Ascending aorta (tissue), 2 donors: ENCODE measurements at regions of chr10 and their contacts with region 1.

Region 1: DNA sequence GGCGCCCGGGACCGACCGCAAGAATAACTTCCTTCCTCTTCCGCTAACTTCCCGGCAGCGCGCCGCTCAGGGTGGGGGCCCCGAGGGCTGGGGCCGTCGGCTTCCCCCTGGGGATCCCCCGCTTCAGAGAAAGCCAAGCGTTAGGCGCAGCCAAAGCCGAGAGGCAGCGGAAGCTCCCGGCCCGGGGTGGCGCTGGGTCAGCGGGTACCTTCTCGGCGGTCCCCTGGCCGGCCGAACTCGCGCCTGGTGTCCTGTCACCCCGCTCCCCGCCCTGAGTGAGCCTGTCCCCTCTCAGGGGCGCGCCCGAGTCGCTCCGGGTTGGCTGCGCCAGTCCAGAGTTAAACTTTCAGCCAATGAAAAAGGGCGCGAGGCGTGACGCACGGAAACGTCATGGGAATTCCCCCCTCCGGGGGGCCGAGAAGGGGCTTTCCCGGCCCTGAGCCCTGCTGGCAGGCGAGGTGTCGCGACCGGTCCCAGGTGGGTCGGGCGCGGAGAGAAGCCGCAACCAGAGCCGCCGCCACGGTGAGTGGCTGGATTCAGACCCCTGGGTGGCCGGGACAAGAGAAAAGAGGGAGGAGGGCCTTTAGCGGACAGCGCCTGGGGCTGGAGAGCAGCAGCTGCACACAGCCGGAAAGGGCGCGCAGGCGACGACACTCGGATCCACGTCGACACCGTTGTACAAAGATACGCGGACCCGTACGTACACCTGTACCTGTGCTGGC is 1.3 kb upstream of the NFKB2 start:
- DNase-seq: peak; percentile 82 to 97
- H3K4me3 ChIP-seq: peak overlapping the region; percentile 65 to 85
- H3K27ac ChIP-seq: peak overlapping the region; percentile 89 to 97
- H3K4me1 ChIP-seq: peaks cover 8 to 23% of the 10 kb centered on the region in 2 donors
- H3K27me3 ChIP-seq: no peaks in the 10 kb centered on the region
- CTCF ChIP-seq: peak in 2 of 3 experiments; percentile 94 to 99

Region 2: DNA sequence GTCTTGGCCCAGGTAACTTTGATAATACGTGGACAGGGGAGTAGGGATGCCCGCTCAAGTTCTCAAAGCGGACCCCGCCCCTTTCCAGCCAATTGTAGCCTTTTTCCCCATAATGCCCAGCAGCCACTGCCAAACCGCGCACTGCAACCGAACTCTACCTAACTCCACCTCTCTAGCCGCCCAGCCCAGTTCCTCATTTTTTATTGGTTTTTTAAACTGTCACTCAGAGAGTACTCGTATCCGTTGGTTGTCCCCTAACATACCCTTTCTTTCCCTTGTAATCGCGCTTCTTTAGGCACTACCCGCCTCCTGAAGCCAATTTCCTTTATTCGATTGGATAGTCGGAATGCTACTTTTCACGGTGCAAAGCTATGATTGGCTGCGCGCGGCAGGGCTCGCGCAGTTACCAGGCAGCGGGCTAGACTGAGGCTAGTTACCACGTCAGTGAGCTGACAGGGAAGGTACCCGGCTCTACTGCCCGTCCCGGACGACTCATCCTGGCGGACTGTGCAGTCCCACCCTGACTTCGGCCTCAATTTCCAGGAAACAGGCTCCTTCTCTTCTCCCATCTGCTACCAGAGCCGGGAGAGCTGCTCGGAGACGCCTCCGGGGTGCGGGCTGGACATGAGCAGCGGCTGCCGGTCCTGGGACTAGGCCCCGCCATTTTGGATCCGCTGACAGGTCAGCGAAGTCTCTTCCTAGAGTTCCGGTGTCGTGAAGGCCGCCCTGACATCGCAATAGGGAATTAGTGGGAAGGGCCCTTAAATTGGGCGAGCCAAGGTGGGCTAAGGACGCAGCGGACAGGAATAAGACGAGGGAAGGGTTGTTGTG is 148.9 kb before region 1 on chr10 and contains the start of gene GBF1:
- intact Hi-C with region 1: loop called (anchors 1 kb)
- DNase-seq: peak; percentile 89 to 97
- H3K4me3 ChIP-seq: peak within 1 kb of the TSS; percentile 66 to 92
- H3K27ac ChIP-seq: peak within 1 kb of the TSS; percentile 85 to 90
- H3K4me1 ChIP-seq: peaks cover 13 to 30% of the 10 kb centered on the region in 2 donors
- H3K27me3 ChIP-seq: no peaks in the 10 kb centered on the region
- CTCF ChIP-seq: no peak
- total RNA-seq, gene GBF1: 56.0 TPM

Region 3: DNA sequence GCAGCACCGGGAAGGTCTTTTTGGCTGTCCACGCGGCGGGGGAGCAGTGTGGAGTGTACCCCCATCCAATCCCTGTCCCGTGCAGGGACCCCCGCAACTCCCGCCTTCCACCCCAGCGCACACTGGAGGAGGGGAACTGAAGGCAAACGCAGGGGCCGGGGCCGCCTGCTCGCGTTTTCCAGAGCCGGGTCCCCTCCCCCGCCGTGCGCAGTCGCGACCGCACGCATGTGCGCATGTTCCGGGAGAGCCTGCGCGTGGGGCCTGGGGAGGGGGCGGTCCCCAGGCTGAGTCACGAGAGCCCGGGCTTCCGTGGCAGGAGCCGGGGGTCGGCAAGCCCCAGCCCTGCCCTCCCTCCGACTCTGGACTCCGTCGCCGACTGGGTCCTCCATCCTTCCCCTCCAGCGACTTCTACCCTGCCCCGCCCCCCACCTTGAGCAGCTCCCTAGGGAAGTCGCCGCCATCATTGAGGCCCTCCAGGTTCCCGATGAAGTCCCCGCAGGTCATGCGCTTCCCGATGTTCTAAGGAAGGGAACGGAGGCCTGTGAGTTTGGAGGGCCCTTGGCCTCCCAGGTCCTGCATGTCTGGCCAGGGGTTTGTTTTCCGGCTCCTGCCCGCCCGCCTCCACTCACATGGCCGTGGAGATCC is 16.3 kb after region 1 on chr10:
- intact Hi-C with region 1: no loop called
- DNase-seq: no peak
- H3K4me3 ChIP-seq: peak overlapping the region; percentile 2 to 40
- H3K27ac ChIP-seq: no peak overlapping the region
- H3K4me1 ChIP-seq: peaks cover 3 to 7% of the 10 kb centered on the region in 2 donors
- H3K27me3 ChIP-seq: peaks cover 16% of the 10 kb centered on the region
- CTCF ChIP-seq: no peak

Region 4: GRCh38 chr10:102420810-102421644 is 26.8 kb after region 1 on chr10 and contains the start of gene FBXL15:
- intact Hi-C with region 1: loop called (anchors 1 kb)
- DNase-seq: peak; percentile 85 to 99
- H3K4me3 ChIP-seq: peak within 1 kb of the TSS; percentile 92 to 93
- H3K27ac ChIP-seq: peak within 1 kb of the TSS; percentile 85 to 86
- H3K4me1 ChIP-seq: peaks cover 16 to 27% of the 10 kb centered on the region in 2 donors
- H3K27me3 ChIP-seq: peaks cover 13% of the 10 kb centered on the region
- CTCF ChIP-seq: no peak
- total RNA-seq, gene FBXL15: 16.5 TPM

Region 5: DNA sequence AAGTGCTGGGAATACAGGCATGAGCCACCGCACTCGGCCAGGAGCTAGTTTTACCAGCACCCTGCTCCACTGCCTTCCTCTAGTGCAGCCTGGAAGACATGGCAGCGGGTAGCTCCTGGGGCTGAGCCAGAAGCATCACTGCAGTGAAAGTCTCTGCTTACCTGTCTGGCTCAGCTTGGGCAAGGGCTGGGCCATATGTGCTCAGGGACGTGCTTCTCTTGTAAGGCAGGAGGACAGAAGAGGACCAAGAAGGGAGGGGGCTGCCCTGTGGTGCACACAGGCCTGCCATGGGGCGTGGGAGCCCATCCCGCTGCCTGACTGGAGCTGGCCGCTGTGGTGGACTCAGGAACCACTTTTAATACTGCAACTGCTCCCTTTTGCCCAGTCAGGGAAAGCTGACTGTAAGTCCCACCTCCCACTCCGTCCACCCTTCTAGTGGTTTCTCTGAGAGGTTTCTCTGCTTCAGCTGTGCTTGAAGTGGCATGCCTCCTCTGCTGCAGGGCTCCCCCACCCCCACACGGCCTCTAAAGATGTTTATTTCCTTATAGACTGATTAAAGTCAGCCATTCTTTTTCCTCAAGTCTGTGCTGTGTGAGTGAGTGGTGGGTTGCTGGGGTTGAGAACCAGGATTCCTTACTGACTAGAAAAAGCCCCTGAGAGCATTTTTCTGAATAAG is 82.4 kb after region 1 on chr10:
- intact Hi-C with region 1: loop called (anchors 1 kb)
- DNase-seq: no peak
- H3K4me3 ChIP-seq: no peak overlapping the region
- H3K27ac ChIP-seq: no peak overlapping the region
- H3K4me1 ChIP-seq: no peaks in the 10 kb centered on the region
- H3K27me3 ChIP-seq: no peaks in the 10 kb centered on the region
- CTCF ChIP-seq: no peak

Region 6: GRCh38 chr10:102583435-102584417 is 189.5 kb after region 1 on chr10:
- intact Hi-C with region 1: loop called (anchors 2 kb)
- DNase-seq: peak; percentile 34 to 93
- H3K4me3 ChIP-seq: no peak overlapping the region
- H3K27ac ChIP-seq: no peak overlapping the region
- H3K4me1 ChIP-seq: no peaks in the 10 kb centered on the region
- H3K27me3 ChIP-seq: no peaks in the 10 kb centered on the region
- CTCF ChIP-seq: peak; percentile 82 to 90 (median 84)

Region 7: DNA sequence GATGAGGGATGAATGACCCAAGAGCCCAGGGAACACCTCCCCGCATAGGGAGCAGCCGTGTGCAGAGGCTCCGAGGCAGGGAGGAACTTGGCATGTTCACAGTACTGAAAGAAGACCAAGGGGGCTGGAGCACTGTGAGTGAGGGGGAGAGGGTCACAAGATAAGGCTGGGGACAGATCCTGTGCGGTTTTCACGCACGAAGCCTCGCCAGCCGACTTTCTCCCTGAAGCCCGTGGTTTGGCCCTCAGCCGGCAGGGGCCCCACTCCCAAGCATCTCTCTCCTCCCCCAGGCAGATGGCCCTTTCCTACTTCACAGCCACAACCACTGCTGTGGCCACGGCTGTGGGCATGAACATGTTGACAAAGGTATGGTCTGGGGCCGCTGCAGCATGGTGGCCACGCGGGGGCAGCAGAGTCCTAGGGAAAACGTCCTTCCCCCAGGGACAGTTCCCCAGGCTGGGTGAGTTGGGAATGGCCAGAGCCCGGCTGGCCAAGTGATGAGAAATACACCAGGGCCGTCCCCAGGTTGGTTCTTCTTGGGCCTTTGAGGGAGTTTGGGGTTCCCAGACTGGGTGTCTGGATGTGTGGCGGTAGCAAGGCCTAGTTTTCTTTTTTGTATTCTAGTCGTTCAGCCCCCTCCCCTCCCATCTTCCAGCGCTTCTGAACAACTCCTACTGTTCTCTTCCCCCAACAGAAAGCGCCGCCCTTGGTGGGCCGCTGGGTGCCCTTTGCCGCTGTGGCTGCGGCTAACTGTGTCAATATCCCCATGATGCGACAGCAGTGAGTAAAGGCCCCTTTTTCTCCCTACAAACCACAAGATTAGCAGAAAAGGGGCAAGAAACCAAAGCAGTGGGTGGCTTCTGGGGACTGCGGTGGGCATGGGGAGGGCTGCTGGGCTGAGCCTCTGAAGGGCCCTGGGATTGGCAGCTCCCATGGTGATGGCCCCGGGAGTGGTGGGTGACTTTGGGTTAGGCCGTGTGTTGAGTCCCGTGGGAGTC is 335.1 kb after region 1 on chr10:
- intact Hi-C with region 1: no loop called
- DNase-seq: peak; percentile 48 to 93
- H3K4me3 ChIP-seq: no peak overlapping the region
- H3K27ac ChIP-seq: no peak overlapping the region
- H3K4me1 ChIP-seq: peaks cover 0 to 7% of the 10 kb centered on the region in 2 donors
- H3K27me3 ChIP-seq: no peaks in the 10 kb centered on the region
- CTCF ChIP-seq: peak; percentile 92 to 94 (median 92)